ENCODE measurements at regions of chr15 and their contacts with region 1.

Region 1: GRCh38 chr15:26572602-26573350 is 200.1 kb downstream of the GABRB3 start:
- DNase-seq: no peak
- ATAC-seq: no peak

Region 2: DNA sequence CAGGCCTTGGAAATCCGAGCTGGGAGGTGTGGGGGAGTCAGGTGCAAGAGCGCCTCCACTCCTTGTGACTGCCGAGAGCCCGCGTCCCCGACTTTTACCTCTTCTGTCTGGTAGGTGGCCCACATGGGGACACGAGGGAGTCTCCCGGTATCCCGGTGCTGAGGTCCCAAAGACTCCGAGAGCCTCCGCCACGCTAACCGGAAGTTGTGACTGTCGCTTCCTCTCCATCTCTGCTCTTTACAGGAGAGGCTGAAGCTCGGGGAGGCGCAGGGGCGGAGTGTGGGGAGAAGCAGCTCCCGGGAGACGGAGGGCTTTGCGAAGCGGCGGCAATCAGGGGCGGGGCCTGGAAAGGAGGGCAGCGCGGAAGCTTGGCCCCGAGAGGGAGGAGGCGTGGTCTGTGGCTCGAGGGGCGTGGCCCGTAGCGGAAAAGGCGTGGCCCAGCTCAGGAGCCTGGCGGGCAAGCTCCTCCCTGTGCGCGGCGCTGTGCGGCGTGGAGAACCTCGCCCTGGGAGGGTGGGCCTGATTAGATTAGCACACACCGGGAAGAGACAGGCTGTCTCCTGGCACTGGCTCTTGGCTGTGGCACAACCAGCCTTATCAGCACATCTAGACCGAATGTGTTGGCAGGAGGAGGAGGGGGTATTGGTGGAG is 56.2 kb after region 1 on chr15:
- intact Hi-C with region 1: loop called in 1 of 2 experiments (anchors 10 kb)
- DNase-seq: peak; percentile 66 to 68
- ATAC-seq: peak; percentile 93

Region 3: GRCh38 chr15:26722621-26723160 is 149.9 kb after region 1 on chr15:
- intact Hi-C with region 1: no loop called
- DNase-seq: no peak
- ATAC-seq: no peak

Measured in left colon (tissue), 2 donors.